Activated T-helper 1 cell treated with anti-CD3 and anti-CD28 coated beads, Interleukin-12 subunit alpha, Interleukin-12 subunit beta, Interleukin-2, Interleukin-4 antibody, amounts not matched to agents 30 ng/mL and 10 ng/mL and 1 ng/mL, durations not matched to agents 14 hours and 24 hours and 36 hours (primary cell): ENCODE measurements at regions of chr1 and their contacts with region 1.

Region 1: DNA sequence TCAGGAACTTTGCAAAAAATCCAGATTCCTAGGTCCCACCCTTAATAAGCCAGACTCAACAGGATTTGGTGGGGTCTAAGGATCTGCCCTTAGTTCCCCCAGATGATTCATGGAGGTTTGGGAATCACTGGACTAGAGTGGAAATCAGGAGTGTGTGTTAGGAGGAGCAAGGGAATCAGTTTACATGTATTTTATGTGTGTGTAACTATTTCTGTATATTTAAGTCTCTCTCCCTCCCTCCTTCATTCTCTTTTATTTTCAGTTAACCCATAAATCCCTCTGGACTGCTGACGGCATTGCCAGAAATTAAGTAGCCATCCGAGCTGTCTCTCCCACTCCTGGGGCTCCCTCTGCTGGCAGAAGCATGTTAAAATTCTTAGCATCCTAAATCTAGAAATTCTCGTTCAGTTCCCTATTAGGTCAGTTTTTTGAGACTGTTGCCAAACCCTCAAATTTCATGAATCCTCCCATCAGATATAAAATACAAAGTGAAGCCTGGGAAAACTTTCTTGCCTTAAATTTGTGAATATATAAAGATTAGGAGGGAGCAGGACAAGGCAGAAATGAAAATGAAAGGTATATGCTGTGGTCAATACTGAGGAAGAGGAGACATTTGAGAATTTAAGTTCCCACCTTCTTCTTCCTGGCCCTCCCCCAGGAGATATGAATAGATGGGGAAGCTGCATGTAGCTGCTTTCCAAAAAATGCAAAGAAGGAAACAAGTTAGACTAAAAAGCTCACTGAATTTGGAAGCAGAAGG is 11.7 kb upstream of the HSD11B1 start:
- DNase-seq: peak; percentile 65
- H3K4me3 Mint-ChIP-seq: peak overlapping the region; percentile 3
- H3K27ac Mint-ChIP-seq: peak overlapping the region; percentile 74
- H3K4me1 Mint-ChIP-seq: peaks cover 70% of the 10 kb centered on the region
- H3K27me3 Mint-ChIP-seq: no peaks in the 10 kb centered on the region

Region 2: GRCh38 chr1:209576798-209577197 is 116.1 kb before region 1 on chr1:
- intact Hi-C with region 1: loop called (anchors 1 kb)
- DNase-seq: peak; percentile 49
- H3K4me3 Mint-ChIP-seq: no peak overlapping the region
- H3K27ac Mint-ChIP-seq: no peak overlapping the region
- H3K4me1 Mint-ChIP-seq: peaks cover 7% of the 10 kb centered on the region
- H3K27me3 Mint-ChIP-seq: peaks cover 25% of the 10 kb centered on the region

Region 3: DNA sequence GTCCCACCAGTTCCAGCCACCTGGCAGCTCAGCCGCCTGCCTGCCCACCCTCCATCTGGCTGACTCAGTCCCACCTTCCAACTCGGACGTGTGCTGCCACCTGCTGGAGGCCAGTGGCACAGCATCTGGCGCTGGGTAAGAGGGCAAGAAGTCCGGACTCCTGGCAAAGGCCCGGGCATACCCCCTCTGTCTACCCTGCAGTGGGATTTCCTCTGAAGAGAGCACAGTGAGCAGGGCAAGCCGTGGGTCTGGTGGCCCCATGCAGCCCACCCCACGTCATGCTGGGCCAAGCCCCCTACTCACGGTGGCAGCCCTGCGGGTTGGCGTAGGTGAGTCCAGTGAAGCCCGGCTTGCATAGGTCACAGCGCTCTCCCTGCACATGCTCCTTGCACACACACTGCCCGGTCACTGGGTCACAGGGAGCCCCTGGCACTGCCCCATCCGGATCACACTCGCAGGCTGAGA is 65.2 kb before region 1 on chr1:
- intact Hi-C with region 1: loop called (anchors 1 kb)
- DNase-seq: peak; percentile 67
- H3K4me3 Mint-ChIP-seq: no peak overlapping the region
- H3K27ac Mint-ChIP-seq: no peak overlapping the region
- H3K4me1 Mint-ChIP-seq: peaks cover 16% of the 10 kb centered on the region
- H3K27me3 Mint-ChIP-seq: no peaks in the 10 kb centered on the region

Region 4: GRCh38 chr1:209659909-209660308 is 33.0 kb before region 1 on chr1:
- intact Hi-C with region 1: loop called (anchors 2 kb)
- DNase-seq: no peak
- H3K4me3 Mint-ChIP-seq: peak overlapping the region; percentile 16
- H3K27ac Mint-ChIP-seq: peak overlapping the region; percentile 88
- H3K4me1 Mint-ChIP-seq: peaks cover 53% of the 10 kb centered on the region
- H3K27me3 Mint-ChIP-seq: no peaks in the 10 kb centered on the region

Region 5: DNA sequence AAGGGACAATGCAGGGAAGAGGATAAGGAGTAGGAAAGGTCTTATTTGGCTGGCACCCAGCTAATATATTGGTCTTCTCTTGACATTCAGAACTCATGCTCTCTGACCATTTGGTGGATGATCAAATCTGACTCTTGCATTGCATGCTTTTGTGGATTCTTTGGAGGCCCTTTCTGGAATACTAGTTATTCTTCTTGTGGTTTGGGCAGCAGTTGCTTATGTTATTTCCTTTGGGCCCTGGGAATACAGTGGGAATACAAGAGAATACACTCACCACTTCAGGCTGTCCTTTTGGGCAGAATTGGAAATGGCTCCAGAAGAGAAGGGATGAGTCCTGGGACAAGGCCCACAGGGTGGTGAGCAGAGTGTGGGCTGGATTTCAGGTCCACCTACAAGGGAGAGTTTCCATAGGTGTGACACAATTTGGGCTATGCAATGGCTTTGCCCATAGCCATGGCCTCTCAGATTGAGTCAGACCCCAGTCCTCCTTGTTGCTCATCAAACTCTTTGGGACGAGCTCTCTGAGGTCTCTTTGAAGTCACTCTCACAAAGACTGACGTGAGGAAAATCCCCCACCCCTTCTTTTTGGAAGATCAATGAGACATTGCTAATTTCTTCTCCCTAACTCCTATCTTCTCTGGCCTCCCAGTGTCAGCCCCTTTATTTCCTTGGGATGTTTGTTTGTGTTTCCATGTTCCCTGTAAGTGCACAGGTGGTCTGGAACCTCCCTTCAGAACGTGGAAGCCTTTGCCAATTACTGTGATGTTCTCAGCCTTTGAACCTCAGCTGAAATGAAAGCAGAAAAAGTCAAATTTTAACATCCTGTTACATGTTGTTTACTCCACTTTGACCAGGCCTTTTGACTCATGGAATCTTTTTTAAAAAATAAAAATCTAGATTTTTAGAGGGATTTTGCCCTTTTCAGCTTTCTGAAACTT is 31.1 kb after region 1 on chr1:
- intact Hi-C with region 1: loop called (anchors 1 kb)
- DNase-seq: peak; percentile 37
- H3K4me3 Mint-ChIP-seq: peak overlapping the region; percentile 53
- H3K27ac Mint-ChIP-seq: peak overlapping the region; percentile 100
- H3K4me1 Mint-ChIP-seq: peaks cover 68% of the 10 kb centered on the region
- H3K27me3 Mint-ChIP-seq: no peaks in the 10 kb centered on the region